Pancreas (tissue), 10 donors: ENCODE measurements at regions of chr1 and their contacts with region 1.

Region 1: GRCh38 chr1:157369808-157370521 is 182.3 kb downstream of the FCRL5 start:
- DNase-seq: peak in 2 of 6 donors; percentile 28 to 54
- ATAC-seq: peak; percentile 53 to 97 (median 92)
- H3K4me3 ChIP-seq: no peak overlapping the region
- H3K27ac ChIP-seq: no peak overlapping the region
- H3K4me1 ChIP-seq: no peaks in the 10 kb centered on the region
- H3K27me3 ChIP-seq: no peaks in the 10 kb centered on the region
- CTCF ChIP-seq: peak; percentile 74 to 93 (median 84)

Region 2: DNA sequence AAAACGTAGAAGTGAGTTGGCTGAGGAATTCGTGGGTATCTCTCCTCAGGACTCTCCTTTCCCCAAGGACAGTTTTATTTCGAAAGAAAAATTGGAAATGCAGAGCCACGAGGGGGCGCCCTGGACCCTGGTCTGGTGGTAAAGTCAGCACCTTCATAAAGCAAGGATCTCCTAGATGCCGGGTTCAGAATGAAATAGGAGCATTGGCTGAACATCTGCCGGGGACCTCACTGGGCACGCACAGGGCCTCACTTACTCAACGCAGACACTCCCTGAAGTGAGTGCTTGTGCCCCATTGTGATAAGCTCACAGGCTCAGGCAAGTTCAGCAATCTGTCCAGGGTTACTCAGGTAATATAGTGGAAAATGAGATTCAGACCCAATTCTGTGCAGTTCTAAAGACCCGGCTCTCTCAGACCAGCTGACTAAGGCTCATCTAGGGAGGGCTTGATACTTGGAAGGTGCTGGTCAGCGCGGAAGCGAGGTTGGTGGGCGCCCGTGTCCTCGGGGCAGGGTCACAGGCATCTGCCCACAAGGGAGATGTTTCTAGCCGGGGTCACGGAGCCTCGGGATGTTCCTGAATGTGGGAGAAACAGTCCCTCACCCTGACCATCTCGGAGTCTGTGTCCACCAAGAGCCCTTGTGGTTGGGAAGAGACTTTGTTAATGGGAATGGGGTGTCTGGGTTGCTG is 176.1 kb before region 1 on chr1:
- intact Hi-C with region 1: loop called in 1 of 3 experiments (anchors 10 kb)
- DNase-seq: peak in 5 of 6 donors; percentile 52 to 94 (median 75)
- ATAC-seq: peak in 3 of 4 donors; percentile 31 to 53 (median 45)
- H3K4me3 ChIP-seq: no peak overlapping the region
- H3K27ac ChIP-seq: no peak overlapping the region
- H3K4me1 ChIP-seq: peaks cover 0 to 10% (median 6%) of the 10 kb centered on the region in 3 donors
- H3K27me3 ChIP-seq: peaks cover 0 to 5% (median 2%) of the 10 kb centered on the region in 4 donors
- CTCF ChIP-seq: peak; percentile 31 to 59 (median 44)

Region 3: DNA sequence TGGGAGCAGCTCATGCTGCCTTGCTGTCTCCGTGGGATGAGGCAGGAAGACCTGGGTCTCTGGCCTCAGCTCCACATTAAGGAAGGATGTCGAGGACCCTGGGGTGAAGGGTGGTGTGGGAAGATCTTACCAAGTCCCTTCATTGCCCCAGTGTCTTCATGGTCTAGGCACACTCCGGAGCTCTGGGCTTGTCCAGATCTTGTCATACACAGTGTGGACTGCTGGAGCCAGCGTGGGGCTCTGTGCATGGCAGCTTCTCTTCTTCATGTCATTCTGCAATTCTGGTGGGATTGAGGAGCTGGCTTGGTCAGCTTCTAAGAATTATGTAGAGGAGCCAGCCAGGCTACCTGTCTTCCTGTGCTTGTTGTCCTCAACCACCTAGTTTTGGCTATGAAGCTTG is 152.5 kb before region 1 on chr1:
- intact Hi-C with region 1: loop called in 1 of 3 experiments (anchors 10 kb)
- DNase-seq: no peak
- ATAC-seq: no peak
- H3K4me3 ChIP-seq: no peak overlapping the region
- H3K27ac ChIP-seq: no peak overlapping the region
- H3K4me1 ChIP-seq: no peaks in the 10 kb centered on the region
- H3K27me3 ChIP-seq: no peaks in the 10 kb centered on the region
- CTCF ChIP-seq: no peak